ENCODE measurements at regions of chr2 and their contacts with region 1.

Region 1: DNA sequence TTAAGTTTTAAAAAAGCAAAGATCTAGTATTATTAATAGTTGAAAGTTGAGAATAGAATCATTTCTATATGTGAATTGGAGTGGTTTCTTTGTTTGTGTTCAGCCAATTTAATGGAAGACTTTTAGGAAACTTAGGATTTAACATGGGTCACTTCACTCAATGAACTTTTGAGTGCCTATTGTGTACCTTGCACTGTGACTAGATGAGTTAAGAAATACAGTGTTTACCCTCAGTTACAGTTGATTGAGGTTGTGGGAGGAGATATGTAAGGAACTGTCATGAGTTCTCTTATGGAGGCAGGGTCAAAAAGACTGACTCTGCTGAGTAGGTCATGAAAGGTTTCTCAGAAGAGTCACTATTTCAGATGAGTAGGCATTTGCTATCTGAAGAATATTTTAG is 98.6 kb downstream of the RAB3GAP1 start:
- DNase-seq: no peak
- H3K4me3 ChIP-seq: no peak overlapping the region
- H3K27ac ChIP-seq: no peak overlapping the region
- H3K4me1 ChIP-seq: no peaks in the 10 kb centered on the region
- H3K27me3 ChIP-seq: no peaks in the 10 kb centered on the region
- CTCF ChIP-seq: no peak

Region 2: DNA sequence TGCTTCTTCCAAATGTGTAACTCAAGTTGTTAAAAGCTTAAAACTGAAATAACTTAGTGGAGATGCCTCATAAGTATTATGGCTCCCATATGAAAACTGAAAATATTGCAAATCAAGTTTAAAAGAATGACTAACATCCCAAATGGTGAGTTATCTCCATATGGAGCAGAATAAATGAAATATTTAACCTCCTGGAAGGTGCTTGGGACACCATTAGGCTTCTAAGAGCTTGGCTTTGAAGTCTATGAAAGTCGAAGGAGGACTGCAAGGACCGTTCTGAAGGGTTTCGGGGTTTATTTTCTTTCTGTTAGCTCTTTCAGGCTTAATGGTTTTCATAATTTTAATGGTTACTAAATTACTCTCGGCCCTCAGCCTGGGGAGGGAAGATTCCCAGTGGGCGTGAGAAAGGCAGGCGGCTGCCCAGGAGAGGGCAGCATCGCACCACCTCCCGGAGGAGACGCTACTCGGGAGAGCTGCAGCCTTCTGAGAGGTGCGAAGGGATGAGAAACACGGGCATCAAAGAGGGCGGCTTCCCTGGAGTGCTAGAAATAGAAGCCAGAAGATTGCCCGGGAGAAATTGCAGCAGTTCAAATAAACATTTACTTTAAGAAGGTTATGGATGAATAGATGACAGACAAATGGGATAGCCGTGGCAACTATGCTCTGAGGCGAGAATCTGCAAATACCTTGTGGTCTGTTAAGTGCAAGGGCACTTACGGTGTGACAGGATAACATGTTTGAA is 146.5 kb before region 1 on chr2:
- intact Hi-C with region 1: loop called (anchors 10 kb)
- DNase-seq: peak in 1 of 2 donors; percentile 78
- H3K4me3 ChIP-seq: no peak overlapping the region
- H3K27ac ChIP-seq: no peak overlapping the region
- H3K4me1 ChIP-seq: no peaks in the 10 kb centered on the region
- H3K27me3 ChIP-seq: no peaks in the 10 kb centered on the region
- CTCF ChIP-seq: peak; percentile 76 to 91 (median 89)